PC-9 (cell line): ENCODE measurements at regions of chr3 and their contacts with region 1.

Region 1: DNA sequence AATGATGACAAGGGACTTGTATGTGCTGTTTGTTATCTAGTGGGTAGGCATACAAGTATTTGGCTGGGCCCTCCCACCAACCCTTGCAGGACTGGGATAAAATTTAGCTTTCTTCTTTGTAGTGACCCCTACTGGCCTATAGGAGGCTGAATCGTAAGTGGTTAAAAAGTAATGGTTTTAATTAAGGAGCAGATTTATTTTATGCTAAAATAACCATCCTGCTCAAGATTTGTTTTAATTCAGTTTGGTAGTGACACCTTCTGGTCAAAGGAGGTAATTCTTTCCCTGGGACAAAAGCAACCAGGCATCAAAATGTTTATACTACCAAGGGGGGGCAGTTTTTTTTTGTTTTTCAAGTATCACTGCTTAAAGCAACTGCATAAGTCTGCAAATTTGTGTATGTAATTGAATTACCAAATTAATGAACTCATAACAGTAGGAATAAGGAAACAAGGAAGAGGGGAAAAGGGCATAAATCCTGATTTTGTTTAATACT is 70.7 kb downstream of the TOP2B start:
- DNase-seq: peak; percentile 21 to 71
- H3K4me3 ChIP-seq: no peak overlapping the region
- H3K27ac ChIP-seq: no peak overlapping the region
- H3K4me1 ChIP-seq: peaks cover 13% of the 10 kb centered on the region
- H3K27me3 ChIP-seq: no peaks in the 10 kb centered on the region
- CTCF ChIP-seq: peak; percentile 92

Region 2: GRCh38 chr3:24773798-24774197 is 820.3 kb before region 1 on chr3:
- CTCF ChIA-PET with region 1: no interaction called
- POLR2A ChIA-PET with region 1: no interaction called
- intact Hi-C with region 1: loop called (anchors 1 kb)
- DNase-seq: peak in 1 of 2 experiments; percentile 31
- H3K4me3 ChIP-seq: no peak overlapping the region
- H3K27ac ChIP-seq: no peak overlapping the region
- H3K4me1 ChIP-seq: no peaks in the 10 kb centered on the region
- H3K27me3 ChIP-seq: no peaks in the 10 kb centered on the region
- CTCF ChIP-seq: peak; percentile 75

Region 3: GRCh38 chr3:24963762-24964625 is 630.1 kb before region 1 on chr3:
- CTCF ChIA-PET with region 1: no interaction called
- POLR2A ChIA-PET with region 1: no interaction called
- intact Hi-C with region 1: loop called (anchors 2 kb)
- DNase-seq: no peak
- H3K4me3 ChIP-seq: no peak overlapping the region
- H3K27ac ChIP-seq: no peak overlapping the region
- H3K4me1 ChIP-seq: no peaks in the 10 kb centered on the region
- H3K27me3 ChIP-seq: no peaks in the 10 kb centered on the region
- CTCF ChIP-seq: peak; percentile 72

Region 4: DNA sequence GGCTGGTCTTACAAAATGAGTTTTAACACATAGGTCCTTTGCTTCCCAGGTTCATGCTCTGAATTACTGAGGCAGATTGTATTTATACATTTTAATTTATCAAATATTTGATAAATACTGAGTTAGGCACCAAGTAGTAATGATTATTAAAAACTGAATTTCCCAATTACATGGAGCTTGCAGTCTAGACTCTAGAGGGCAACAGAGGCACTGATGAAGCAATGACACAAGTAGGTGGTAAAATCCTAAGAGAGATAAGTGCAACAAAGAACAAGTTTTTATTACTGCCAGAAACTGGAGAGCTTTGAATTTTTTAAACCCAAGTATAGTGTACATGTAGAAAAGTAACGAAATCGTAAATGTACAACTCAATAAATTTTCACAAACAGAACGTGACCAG is 572.2 kb before region 1 on chr3:
- CTCF ChIA-PET with region 1: no interaction called
- POLR2A ChIA-PET with region 1: no interaction called
- intact Hi-C with region 1: loop called (anchors 5 kb)
- DNase-seq: no peak
- H3K4me3 ChIP-seq: no peak overlapping the region
- H3K27ac ChIP-seq: no peak overlapping the region
- H3K4me1 ChIP-seq: no peaks in the 10 kb centered on the region
- H3K27me3 ChIP-seq: no peaks in the 10 kb centered on the region
- CTCF ChIP-seq: peak; percentile 49

Region 5: DNA sequence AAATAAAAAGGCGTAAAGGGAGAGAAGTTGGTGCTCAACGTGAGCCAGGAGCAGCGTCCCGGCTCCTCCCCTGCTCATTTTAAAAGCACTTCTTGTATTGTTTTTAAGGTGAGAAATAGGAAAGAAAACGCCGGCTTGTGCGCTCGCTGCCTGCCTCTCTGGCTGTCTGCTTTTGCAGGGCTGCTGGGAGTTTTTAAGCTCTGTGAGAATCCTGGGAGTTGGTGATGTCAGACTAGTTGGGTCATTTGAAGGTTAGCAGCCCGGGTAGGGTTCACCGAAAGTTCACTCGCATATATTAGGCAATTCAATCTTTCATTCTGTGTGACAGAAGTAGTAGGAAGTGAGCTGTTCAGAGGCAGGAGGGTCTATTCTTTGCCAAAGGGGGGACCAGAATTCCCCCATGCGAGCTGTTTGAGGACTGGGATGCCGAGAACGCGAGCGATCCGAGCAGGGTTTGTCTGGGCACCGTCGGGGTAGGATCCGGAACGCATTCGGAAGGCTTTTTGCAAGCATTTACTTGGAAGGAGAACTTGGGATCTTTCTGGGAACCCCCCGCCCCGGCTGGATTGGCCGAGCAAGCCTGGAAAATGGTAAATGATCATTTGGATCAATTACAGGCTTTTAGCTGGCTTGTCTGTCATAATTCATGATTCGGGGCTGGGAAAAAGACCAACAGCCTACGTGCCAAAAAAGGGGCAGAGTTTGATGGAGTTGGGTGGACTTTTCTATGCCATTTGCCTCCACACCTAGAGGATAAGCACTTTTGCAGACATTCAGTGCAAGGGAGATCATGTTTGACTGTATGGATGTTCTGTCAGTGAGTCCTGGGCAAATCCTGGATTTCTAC is 165.9 kb before region 1 on chr3 and contains the start of gene RARB:
- CTCF ChIA-PET with region 1: no interaction called
- POLR2A ChIA-PET with region 1: no interaction called
- intact Hi-C with region 1: loop called (anchors 5 kb)
- DNase-seq: peak; percentile 39 to 50
- H3K4me3 ChIP-seq: peak within 1 kb of the TSS; percentile 51; the same call in 1 of the 2 replicates
- H3K27ac ChIP-seq: peak within 1 kb of the TSS; percentile 64
- H3K4me1 ChIP-seq: peaks cover 31% of the 10 kb centered on the region
- H3K27me3 ChIP-seq: no peaks in the 10 kb centered on the region
- CTCF ChIP-seq: no peak
- total RNA-seq, gene RARB: 0.75 and 1.0 TPM in 2 replicates

Region 6: DNA sequence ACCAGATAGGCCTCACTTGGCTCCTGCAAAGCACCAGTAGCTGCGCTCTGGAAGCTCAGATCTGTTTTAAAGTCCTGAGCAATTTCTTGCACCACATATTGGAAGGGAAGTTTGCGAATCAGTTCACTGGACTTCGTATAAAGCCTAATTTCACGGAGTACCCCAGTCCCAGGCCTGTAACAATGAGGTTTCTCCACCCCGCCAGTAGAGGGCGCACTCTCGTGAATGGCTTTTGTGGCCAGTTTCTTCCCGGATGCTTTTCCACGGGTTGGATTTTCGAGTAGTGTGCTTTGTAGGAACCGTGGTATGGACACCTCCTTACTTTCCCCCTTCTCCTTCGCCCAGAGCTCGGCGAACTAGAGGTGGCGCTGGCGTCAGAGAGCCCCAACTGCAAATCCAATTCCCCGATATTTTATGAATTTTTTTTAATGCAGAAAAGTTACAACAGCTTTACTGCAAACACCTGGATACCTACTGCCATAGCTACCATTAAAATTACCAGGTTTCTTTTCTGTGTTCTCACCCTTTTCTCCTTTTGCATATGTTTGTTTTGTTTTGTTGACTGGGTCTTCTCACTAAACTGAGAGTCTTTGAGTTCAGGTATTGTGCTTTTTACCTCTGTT is 152.7 kb before region 1 on chr3:
- CTCF ChIA-PET with region 1: interaction called, 3 read pairs
- POLR2A ChIA-PET with region 1: no interaction called
- intact Hi-C with region 1: loop called (anchors 5 kb)
- DNase-seq: no peak
- H3K4me3 ChIP-seq: no peak overlapping the region
- H3K27ac ChIP-seq: no peak overlapping the region
- H3K4me1 ChIP-seq: no peaks in the 10 kb centered on the region
- H3K27me3 ChIP-seq: no peaks in the 10 kb centered on the region
- CTCF ChIP-seq: peak; percentile 85